Heart left ventricle (tissue), 16 donors: ENCODE measurements at regions of chr5 and their contacts with region 1.

Region 1: GRCh38 chr5:9774472-9775079 is 144.4 kb upstream of the TAS2R1 start:
- DNase-seq: no peak
- ATAC-seq: no peak
- H3K4me3 ChIP-seq: no peak overlapping the region
- H3K27ac ChIP-seq: no peak overlapping the region
- H3K4me1 ChIP-seq: no peaks in the 10 kb centered on the region
- H3K27me3 ChIP-seq: no peaks in the 10 kb centered on the region
- CTCF ChIP-seq: peak in 3 of 12 donors; percentile 11 to 28 (median 12)
- POLR2A ChIP-seq: no peak

Region 2: GRCh38 chr5:9698125-9698826 is 76.3 kb before region 1 on chr5:
- intact Hi-C with region 1: no loop called
- DNase-seq: no peak
- ATAC-seq: no peak
- H3K4me3 ChIP-seq: peak overlapping the region in 1 of 12 donors; percentile 18
- H3K27ac ChIP-seq: peak overlapping the region in 1 of 12 donors; percentile 12
- H3K4me1 ChIP-seq: peaks cover 0 to 6% (median 0%) of the 10 kb centered on the region in 12 donors
- H3K27me3 ChIP-seq: no peaks in the 10 kb centered on the region
- CTCF ChIP-seq: no peak
- POLR2A ChIP-seq: no peak

Region 3: GRCh38 chr5:9820691-9821449 is 46.3 kb after region 1 on chr5:
- intact Hi-C with region 1: no loop called
- DNase-seq: no peak
- ATAC-seq: no peak
- H3K4me3 ChIP-seq: no peak overlapping the region
- H3K27ac ChIP-seq: peak overlapping the region in 3 of 12 donors; percentile 6 to 29 (median 22)
- H3K4me1 ChIP-seq: no peaks in the 10 kb centered on the region
- H3K27me3 ChIP-seq: no peaks in the 10 kb centered on the region
- CTCF ChIP-seq: no peak
- POLR2A ChIP-seq: no peak

Region 4: DNA sequence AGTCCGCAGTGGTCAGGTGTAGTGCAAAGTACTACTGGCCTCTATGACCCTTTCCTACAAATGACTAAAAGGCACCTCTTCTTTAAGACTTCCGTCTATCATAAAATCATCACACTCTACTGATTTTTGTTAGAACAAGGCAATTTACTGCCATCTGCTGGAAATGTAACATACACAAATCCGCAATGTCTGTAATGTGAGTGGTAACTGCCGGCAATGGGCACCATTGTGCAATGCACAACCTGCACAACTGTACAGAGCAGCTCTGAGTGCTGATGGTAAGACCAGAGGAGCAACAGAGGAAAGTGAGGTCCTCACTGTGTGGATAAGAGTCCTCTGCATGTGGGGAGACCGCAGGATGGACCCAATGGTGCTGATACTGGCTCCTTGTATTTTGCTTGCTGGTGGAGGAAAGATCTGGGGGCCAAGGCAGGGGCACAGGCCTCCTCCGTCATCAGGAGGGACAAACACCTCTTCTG is 371.4 kb after region 1 on chr5:
- intact Hi-C with region 1: loop called in 1 of 10 experiments (anchors 10 kb)
- DNase-seq: no peak
- ATAC-seq: no peak
- H3K4me3 ChIP-seq: no peak overlapping the region
- H3K27ac ChIP-seq: no peak overlapping the region
- H3K4me1 ChIP-seq: no peaks in the 10 kb centered on the region
- H3K27me3 ChIP-seq: peaks cover 0 to 6% (median 0%) of the 10 kb centered on the region in 9 donors
- CTCF ChIP-seq: peak in 4 of 12 donors; percentile 16 to 33 (median 19)
- POLR2A ChIP-seq: no peak